ENCODE measurements at regions of chr7 and their contacts with region 1.

Region 1: DNA sequence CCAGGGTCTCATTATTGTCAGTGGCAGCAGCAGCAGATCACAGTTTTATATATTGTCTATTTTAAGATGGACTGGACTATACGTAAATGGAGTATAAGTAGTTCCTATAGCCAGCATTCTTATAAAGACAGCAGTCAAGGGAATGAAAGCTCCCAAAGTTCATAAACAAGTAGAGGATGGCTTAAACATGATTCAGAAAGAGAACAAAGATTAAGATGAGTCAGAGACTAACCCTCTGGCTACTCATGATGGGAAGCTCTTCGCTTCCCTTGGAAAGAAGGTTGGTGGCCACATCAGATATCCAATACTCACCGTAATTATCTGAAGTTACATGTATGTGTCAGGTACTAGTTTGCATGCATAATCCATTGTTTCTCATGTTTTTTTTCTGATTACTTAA is 277.0 kb downstream of the INHBA start:
- DNase-seq: peak; percentile 70
- H3K4me3 Mint-ChIP-seq: no peak overlapping the region
- H3K27ac Mint-ChIP-seq: no peak overlapping the region
- H3K4me1 Mint-ChIP-seq: peaks cover 17% of the 10 kb centered on the region
- H3K27me3 Mint-ChIP-seq: no peaks in the 10 kb centered on the region
- CTCF ChIP-seq: no peak

Region 2: GRCh38 chr7:41437257-41438196 is 11.6 kb after region 1 on chr7:
- CTCF ChIA-PET with region 1: no interaction called
- POLR2A ChIA-PET with region 1: interaction called, 11 read pairs
- intact Hi-C with region 1: no loop called
- DNase-seq: peak; percentile 57
- H3K4me3 Mint-ChIP-seq: no peak overlapping the region
- H3K27ac Mint-ChIP-seq: no peak overlapping the region
- H3K4me1 Mint-ChIP-seq: peaks cover 17% of the 10 kb centered on the region
- H3K27me3 Mint-ChIP-seq: no peaks in the 10 kb centered on the region
- CTCF ChIP-seq: no peak

Region 3: GRCh38 chr7:41491883-41492471 is 66.1 kb after region 1 on chr7:
- CTCF ChIA-PET with region 1: no interaction called
- POLR2A ChIA-PET with region 1: no interaction called
- intact Hi-C with region 1: no loop called
- DNase-seq: no peak
- H3K4me3 Mint-ChIP-seq: no peak overlapping the region
- H3K27ac Mint-ChIP-seq: no peak overlapping the region
- H3K4me1 Mint-ChIP-seq: no peaks in the 10 kb centered on the region
- H3K27me3 Mint-ChIP-seq: no peaks in the 10 kb centered on the region
- CTCF ChIP-seq: no peak

Measured in MCF 10A (cell line).